ENCODE measurements at regions of chr1 and their contacts with region 1.

Region 1: GRCh38 chr1:95043141-95043980 is 29.4 kb downstream of the ALG14 start:
- DNase-seq: peak; percentile 87
- ATAC-seq: peak; percentile 99
- H3K4me3 ChIP-seq: no peak overlapping the region
- H3K4me3 Mint-ChIP-seq: no peak overlapping the region
- H3K27ac ChIP-seq: no peak overlapping the region
- H3K27ac Mint-ChIP-seq: no peak overlapping the region
- H3K4me1 ChIP-seq: peaks cover 0 to 3% of the 10 kb centered on the region in 2 donors
- H3K4me1 Mint-ChIP-seq: no peaks in the 10 kb centered on the region
- H3K27me3 ChIP-seq: no peaks in the 10 kb centered on the region
- H3K27me3 Mint-ChIP-seq: no peaks in the 10 kb centered on the region
- CTCF ChIP-seq: peak; percentile 99

Region 2: GRCh38 chr1:94514095-94514727 is 529.1 kb before region 1 on chr1:
- CTCF ChIA-PET with region 1: interaction called, 3 read pairs
- POLR2A ChIA-PET with region 1: no interaction called
- intact Hi-C with region 1: loop called (anchors 10 kb)
- DNase-seq: peak; percentile 13
- ATAC-seq: no peak
- H3K4me3 ChIP-seq: no peak overlapping the region
- H3K4me3 Mint-ChIP-seq: no peak overlapping the region
- H3K27ac ChIP-seq: no peak overlapping the region
- H3K27ac Mint-ChIP-seq: no peak overlapping the region
- H3K4me1 ChIP-seq: no peaks in the 10 kb centered on the region
- H3K4me1 Mint-ChIP-seq: no peaks in the 10 kb centered on the region
- H3K27me3 ChIP-seq: no peaks in the 10 kb centered on the region
- H3K27me3 Mint-ChIP-seq: no peaks in the 10 kb centered on the region
- CTCF ChIP-seq: peak; percentile 54

Region 3: DNA sequence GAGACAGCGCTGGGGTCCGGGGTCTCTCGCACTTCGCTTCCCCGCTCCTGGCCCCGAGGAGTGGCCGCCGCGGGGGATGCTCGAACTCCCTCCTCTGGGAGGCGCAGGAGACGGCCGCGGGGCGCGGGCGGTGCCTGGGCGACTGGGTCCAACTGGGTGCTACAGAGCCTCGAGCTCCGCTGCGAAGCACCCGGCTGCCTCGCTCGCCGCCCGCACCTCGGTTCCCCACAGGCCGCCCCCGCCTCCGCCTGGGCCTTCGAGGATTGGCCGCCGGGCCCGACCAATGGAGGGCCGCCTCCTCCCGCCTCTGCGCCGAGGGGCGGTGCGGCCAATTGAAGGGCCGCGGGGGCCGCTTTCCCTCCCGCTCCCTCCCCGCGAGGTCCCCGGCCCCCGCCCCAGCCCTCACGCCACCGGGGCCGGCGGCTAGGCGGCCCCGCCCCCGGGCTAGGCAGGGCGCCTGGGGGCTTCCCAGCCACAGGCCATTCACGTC is 116.4 kb before region 1 on chr1 and contains the start of gene CNN3:
- CTCF ChIA-PET with region 1: interaction called, 10 read pairs
- POLR2A ChIA-PET with region 1: no interaction called
- intact Hi-C with region 1: loop called (anchors 1 kb)
- DNase-seq: peak; percentile 86
- ATAC-seq: peak; percentile 85
- H3K4me3 ChIP-seq: peak within 1 kb of the TSS; percentile 56 to 67 (median 61)
- H3K4me3 Mint-ChIP-seq: peak within 1 kb of the TSS; percentile 95
- H3K27ac ChIP-seq: peak within 1 kb of the TSS in 1 of 2 donors; percentile 82
- H3K27ac Mint-ChIP-seq: peak within 1 kb of the TSS; percentile 80
- H3K4me1 ChIP-seq: peaks cover 24 to 28% of the 10 kb centered on the region in 2 donors
- H3K4me1 Mint-ChIP-seq: peaks cover 26% of the 10 kb centered on the region
- H3K27me3 ChIP-seq: peaks cover 0 to 30% (median 9%) of the 10 kb centered on the region in 4 experiments
- H3K27me3 Mint-ChIP-seq: peaks cover 27% of the 10 kb centered on the region
- CTCF ChIP-seq: no peak
- total RNA-seq, gene CNN3: 17.2 and 21.1 TPM in 2 replicates

Region 4: GRCh38 chr1:95061445-95062006 is 18.2 kb after region 1 on chr1:
- CTCF ChIA-PET with region 1: interaction called, 10 read pairs
- POLR2A ChIA-PET with region 1: no interaction called
- intact Hi-C with region 1: no loop called
- DNase-seq: no peak
- ATAC-seq: no peak
- H3K4me3 ChIP-seq: no peak overlapping the region
- H3K4me3 Mint-ChIP-seq: no peak overlapping the region
- H3K27ac ChIP-seq: no peak overlapping the region
- H3K27ac Mint-ChIP-seq: no peak overlapping the region
- H3K4me1 ChIP-seq: no peaks in the 10 kb centered on the region
- H3K4me1 Mint-ChIP-seq: no peaks in the 10 kb centered on the region
- H3K27me3 ChIP-seq: no peaks in the 10 kb centered on the region
- H3K27me3 Mint-ChIP-seq: no peaks in the 10 kb centered on the region
- CTCF ChIP-seq: no peak

Region 5: GRCh38 chr1:95233737-95234500 is 190.6 kb after region 1 on chr1 and contains the start of gene RWDD3:
- CTCF ChIA-PET with region 1: interaction called, 12 read pairs
- POLR2A ChIA-PET with region 1: no interaction called
- intact Hi-C with region 1: loop called (anchors 1 kb)
- DNase-seq: peak; percentile 95
- ATAC-seq: peak; percentile 96
- H3K4me3 ChIP-seq: peak within 1 kb of the TSS; percentile 55 to 86 (median 78)
- H3K4me3 Mint-ChIP-seq: peak within 1 kb of the TSS; percentile 87
- H3K27ac ChIP-seq: peak within 1 kb of the TSS; percentile 63 to 73
- H3K27ac Mint-ChIP-seq: peak within 1 kb of the TSS; percentile 89
- H3K4me1 ChIP-seq: peaks cover 10 to 11% of the 10 kb centered on the region in 2 donors
- H3K4me1 Mint-ChIP-seq: peaks cover 35% of the 10 kb centered on the region
- H3K27me3 ChIP-seq: peaks cover 0 to 10% (median 4%) of the 10 kb centered on the region in 4 experiments
- H3K27me3 Mint-ChIP-seq: peaks cover 10% of the 10 kb centered on the region
- CTCF ChIP-seq: peak; percentile 82
- total RNA-seq, gene RWDD3: 21.9 and 28.1 TPM in 2 replicates

Measured in B cell (primary cell).